ENCODE measurements at regions of chr2 and their contacts with region 1.

Region 1: GRCh38 chr2:142130111-142131009 is 456 bp downstream of the LRP1B start:
- DNase-seq: peak; percentile 58 to 76
- H3K4me3 ChIP-seq: peak overlapping the region; percentile 60
- H3K4me1 ChIP-seq: peaks cover 16% of the 10 kb centered on the region
- H3K27me3 ChIP-seq: no peaks in the 10 kb centered on the region

Region 2: GRCh38 chr2:140353541-140353940 is 1776.8 kb before region 1 on chr2:
- in situ Hi-C with region 1: loop called (anchors 25 kb)
- DNase-seq: no peak
- H3K4me3 ChIP-seq: no peak overlapping the region
- H3K4me1 ChIP-seq: peaks cover 73% of the 10 kb centered on the region
- H3K27me3 ChIP-seq: no peaks in the 10 kb centered on the region

Region 3: DNA sequence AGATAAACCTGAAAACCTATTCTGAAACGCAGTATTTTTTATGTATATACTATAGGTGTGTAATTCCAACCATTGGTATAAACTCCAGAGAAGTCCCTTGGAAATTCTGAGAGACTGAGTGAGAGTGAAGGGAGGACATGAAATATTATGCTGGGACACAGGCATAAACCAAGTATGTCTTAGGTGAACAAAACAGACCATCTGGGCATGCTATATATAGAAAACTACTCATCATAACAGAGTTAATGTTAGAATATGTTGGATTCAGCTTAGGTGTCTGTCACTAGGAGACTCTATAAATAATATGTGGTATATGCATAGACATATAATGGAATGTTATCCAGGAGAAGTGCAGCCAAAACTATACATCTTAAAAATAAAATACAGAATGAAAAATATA is 282.2 kb before region 1 on chr2:
- in situ Hi-C with region 1: no loop called
- DNase-seq: no peak
- H3K4me3 ChIP-seq: no peak overlapping the region
- H3K4me1 ChIP-seq: no peaks in the 10 kb centered on the region
- H3K27me3 ChIP-seq: no peaks in the 10 kb centered on the region

Region 4: GRCh38 chr2:142557391-142557790 is 427.0 kb after region 1 on chr2:
- in situ Hi-C with region 1: no loop called
- DNase-seq: no peak
- H3K4me3 ChIP-seq: no peak overlapping the region
- H3K4me1 ChIP-seq: no peaks in the 10 kb centered on the region
- H3K27me3 ChIP-seq: no peaks in the 10 kb centered on the region